A549 (cell line): ENCODE measurements at regions of chr5 and their contacts with region 1.

Region 1: DNA sequence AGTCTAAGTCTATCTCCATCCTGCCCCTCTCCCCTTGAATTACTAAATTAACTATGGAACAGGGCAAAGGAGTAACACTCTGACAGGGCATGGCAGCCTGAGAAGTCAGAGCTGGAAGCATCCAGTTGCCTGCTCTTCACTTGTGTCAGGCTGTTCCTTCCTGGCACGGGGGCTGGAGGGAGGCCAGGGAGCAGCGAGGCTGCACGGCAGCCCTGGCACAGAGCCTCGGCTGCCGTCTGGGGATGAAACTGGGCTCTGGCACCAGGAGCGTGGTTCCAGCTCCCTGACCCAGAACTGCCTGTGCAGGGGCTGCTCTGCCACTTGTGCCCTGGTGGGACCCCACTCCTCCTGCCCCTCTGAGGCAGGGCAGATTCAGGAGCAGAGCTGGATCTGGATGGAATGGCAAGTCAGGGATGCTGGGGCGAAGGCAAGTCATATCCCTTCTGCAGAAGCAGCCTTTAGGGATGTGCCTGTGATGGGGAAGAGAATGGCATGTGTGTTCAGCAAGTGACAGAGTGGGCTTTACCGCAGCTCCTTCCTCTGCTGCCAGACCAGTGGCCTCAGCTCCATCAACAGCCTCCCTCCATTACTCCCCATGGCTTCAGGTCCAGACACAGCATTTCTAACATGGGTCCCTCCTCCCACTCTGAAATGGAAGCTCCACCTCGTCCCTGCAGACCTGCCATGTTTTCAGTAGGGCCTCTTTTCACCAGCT is 42.2 kb upstream of the PDE8B start:
- DNase-seq: peak; percentile 50 to 69
- ATAC-seq: peak; percentile 83 to 84
- H3K4me3 ChIP-seq: peak overlapping the region; percentile 8; the same call in 1 of the 3 replicates
- H3K27ac ChIP-seq: peak overlapping the region; percentile 91 to 96
- H3K4me1 ChIP-seq: peaks cover 57% of the 10 kb centered on the region
- CTCF ChIP-seq: no peak
- EP300 ChIP-seq: no peak; a peak in 1 of 5 replicates
- POLR2A ChIP-seq: no peak
- RAD21 ChIP-seq: no peak

Region 2: GRCh38 chr5:77123057-77123456 is 45.3 kb before region 1 on chr5:
- CTCF ChIA-PET with region 1: no interaction called
- POLR2A ChIA-PET with region 1: no interaction called
- DNase-seq: no peak
- ATAC-seq: no peak
- H3K4me3 ChIP-seq: no peak overlapping the region
- H3K27ac ChIP-seq: no peak overlapping the region
- H3K4me1 ChIP-seq: no peaks in the 10 kb centered on the region
- CTCF ChIP-seq: no peak
- EP300 ChIP-seq: no peak
- POLR2A ChIP-seq: no peak
- RAD21 ChIP-seq: no peak

Region 3: GRCh38 chr5:77155179-77155785 is 13.0 kb before region 1 on chr5:
- CTCF ChIA-PET with region 1: interaction called, 12 read pairs
- POLR2A ChIA-PET with region 1: no interaction called
- DNase-seq: no peak
- ATAC-seq: no peak
- H3K4me3 ChIP-seq: no peak overlapping the region
- H3K27ac ChIP-seq: no peak overlapping the region
- H3K4me1 ChIP-seq: no peaks in the 10 kb centered on the region
- CTCF ChIP-seq: no peak
- EP300 ChIP-seq: no peak
- POLR2A ChIP-seq: no peak
- RAD21 ChIP-seq: no peak

Region 4: DNA sequence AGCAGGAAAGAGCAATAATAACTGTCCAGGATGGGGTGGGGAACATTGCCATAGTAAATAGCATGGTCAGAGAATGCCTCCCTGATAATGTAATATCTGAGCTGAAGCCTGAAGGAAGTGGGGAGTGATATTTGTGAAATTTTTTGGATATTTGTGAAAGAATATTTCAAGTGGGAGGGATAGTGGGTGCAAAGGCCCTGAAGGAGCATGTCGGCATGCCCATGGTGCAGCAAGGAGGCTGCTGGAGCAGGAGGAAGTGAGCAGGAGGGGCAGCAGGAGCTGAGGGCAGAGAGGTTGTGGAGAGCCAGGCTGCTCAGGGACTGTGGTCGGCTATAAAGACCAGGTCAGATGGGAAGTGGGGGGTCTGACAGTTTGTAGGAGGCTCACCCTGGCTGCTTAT is 21.1 kb after region 1 on chr5:
- CTCF ChIA-PET with region 1: no interaction called
- POLR2A ChIA-PET with region 1: no interaction called
- DNase-seq: no peak
- ATAC-seq: no peak
- H3K4me3 ChIP-seq: no peak overlapping the region
- H3K27ac ChIP-seq: no peak overlapping the region; a peak in 1 of 6 replicates
- H3K4me1 ChIP-seq: peaks cover 12% of the 10 kb centered on the region
- CTCF ChIP-seq: no peak
- EP300 ChIP-seq: no peak
- POLR2A ChIP-seq: no peak
- RAD21 ChIP-seq: no peak